K562 (cell line): ENCODE measurements at regions of chrX and their contacts with region 1.

Region 1: DNA sequence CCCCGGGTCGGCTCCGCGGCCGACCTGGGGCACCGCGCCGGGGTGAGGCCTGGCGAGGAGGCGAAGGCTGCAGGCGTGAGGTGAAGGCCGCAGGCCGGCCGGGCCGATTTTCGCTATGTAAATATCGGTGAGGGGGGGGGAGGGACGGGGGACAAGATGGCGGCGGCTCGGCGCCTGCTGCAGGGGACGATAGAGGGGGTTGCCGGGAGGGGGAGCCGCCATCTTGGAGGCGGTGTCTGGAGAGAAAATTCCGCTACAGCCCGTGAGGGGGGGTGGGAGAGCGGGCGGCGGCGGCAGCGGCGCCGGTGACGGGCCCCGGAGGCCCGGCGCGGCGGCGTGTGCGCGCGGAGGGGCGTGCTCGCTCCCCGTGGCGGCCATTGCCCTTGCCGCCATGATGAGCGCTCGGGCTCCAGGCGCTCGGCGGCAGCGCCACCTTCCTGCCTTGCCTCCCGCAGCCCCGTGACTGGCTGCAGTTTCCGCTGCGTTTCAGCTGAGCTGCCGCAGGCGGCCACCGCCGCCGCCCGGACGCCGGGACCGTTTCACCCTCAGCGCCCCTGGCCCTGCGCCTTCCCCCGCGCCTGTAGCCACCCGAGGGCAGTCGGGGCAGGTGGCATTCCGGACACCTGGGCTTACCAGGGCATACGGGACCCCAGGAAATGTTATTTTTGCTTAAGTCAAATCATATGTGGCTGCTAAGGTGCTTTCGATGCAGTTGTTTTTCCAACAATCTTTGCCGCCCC is 692 bp downstream of the ZFX start:
- DNase-seq: peak; percentile 84 to 94 (median 89)
- ATAC-seq: peak; percentile 87
- H3K4me3 ChIP-seq: peak overlapping the region; percentile 89
- H3K27ac ChIP-seq: peak overlapping the region; percentile 96
- H3K4me1 ChIP-seq: peaks cover 12 to 30% of the 10 kb centered on the region in 2 experiments; a peak in 4 of 5 replicates
- H3K27me3 ChIP-seq: no peaks in the 10 kb centered on the region
- CTCF ChIP-seq: peak; percentile 32 to 89 (median 70); a peak in 5 of 6 replicates
- EP300 ChIP-seq: no peak
- POLR2A ChIP-seq: 0 out of 2 replicates have a peak, but pooled peaks have one; percentile 39
- RAD21 ChIP-seq: peak; percentile 40 to 54

Region 2: DNA sequence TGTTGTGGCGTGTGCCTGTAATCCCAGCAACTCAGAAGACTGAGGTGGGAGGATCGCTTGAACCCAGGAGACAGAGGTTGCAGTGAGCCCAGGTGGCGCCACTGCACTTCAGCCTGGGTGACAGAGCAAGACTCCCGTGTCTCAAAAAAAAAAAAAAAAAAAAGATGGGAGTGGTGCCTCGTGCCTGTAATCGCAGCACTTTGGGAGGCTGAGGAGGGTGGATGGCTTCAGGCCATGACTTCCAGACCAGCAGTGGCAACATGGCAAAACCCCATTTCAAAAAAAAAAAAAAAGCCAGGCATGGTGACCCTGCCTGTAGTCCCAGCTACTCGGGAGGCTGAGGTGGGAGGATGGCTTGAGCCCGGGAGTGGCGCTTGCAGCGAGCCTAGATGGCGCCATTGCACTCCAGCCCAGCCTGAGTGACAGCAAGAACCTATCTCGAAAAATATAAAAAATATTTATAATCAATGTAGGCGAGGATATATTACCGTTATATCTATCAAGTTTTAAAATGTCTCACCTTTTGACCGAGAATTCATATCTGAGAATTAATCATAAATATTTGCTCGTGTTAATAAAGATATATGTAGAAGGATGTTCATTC is 68.5 kb before region 1 on chrX:
- CTCF ChIA-PET with region 1: interaction called, 9 read pairs
- POLR2A ChIA-PET with region 1: no interaction called
- in situ Hi-C with region 1: no loop called
- intact Hi-C with region 1: loop called (anchors 2 kb)
- DNase-seq: peak in 2 of 4 experiments; percentile 10 to 86
- ATAC-seq: peak; percentile 86
- H3K4me3 ChIP-seq: no peak overlapping the region
- H3K27ac ChIP-seq: no peak overlapping the region
- H3K4me1 ChIP-seq: no peaks in the 10 kb centered on the region; a peak in 2 of 5 replicates
- H3K27me3 ChIP-seq: no peaks in the 10 kb centered on the region
- CTCF ChIP-seq: peak; percentile 64 to 73 (median 66)
- EP300 ChIP-seq: no peak
- POLR2A ChIP-seq: no peak
- RAD21 ChIP-seq: peak; percentile 34 to 62; a peak in 3 of 4 replicates

Region 3: GRCh38 chrX:24173115-24173847 is 23.1 kb after region 1 on chrX:
- CTCF ChIA-PET with region 1: no interaction called
- POLR2A ChIA-PET with region 1: no interaction called
- in situ Hi-C with region 1: no loop called
- intact Hi-C with region 1: no loop called
- DNase-seq: no peak
- ATAC-seq: no peak
- H3K4me3 ChIP-seq: no peak overlapping the region
- H3K27ac ChIP-seq: no peak overlapping the region
- H3K4me1 ChIP-seq: peaks cover 0 to 2% of the 10 kb centered on the region in 2 experiments; a peak in 3 of 5 replicates
- H3K27me3 ChIP-seq: no peaks in the 10 kb centered on the region
- CTCF ChIP-seq: no peak
- EP300 ChIP-seq: no peak
- POLR2A ChIP-seq: no peak
- RAD21 ChIP-seq: no peak